Left cardiac atrium (tissue), 4 donors: ENCODE measurements at regions of chr6 and their contacts with region 1.

Region 1: GRCh38 chr6:87701676-87702588 is at the start of gene AKIRIN2:
- DNase-seq: peak; percentile 96
- ATAC-seq: peak; percentile 94
- total RNA-seq, gene AKIRIN2: 34.0 to 38.1 TPM

Region 2: DNA sequence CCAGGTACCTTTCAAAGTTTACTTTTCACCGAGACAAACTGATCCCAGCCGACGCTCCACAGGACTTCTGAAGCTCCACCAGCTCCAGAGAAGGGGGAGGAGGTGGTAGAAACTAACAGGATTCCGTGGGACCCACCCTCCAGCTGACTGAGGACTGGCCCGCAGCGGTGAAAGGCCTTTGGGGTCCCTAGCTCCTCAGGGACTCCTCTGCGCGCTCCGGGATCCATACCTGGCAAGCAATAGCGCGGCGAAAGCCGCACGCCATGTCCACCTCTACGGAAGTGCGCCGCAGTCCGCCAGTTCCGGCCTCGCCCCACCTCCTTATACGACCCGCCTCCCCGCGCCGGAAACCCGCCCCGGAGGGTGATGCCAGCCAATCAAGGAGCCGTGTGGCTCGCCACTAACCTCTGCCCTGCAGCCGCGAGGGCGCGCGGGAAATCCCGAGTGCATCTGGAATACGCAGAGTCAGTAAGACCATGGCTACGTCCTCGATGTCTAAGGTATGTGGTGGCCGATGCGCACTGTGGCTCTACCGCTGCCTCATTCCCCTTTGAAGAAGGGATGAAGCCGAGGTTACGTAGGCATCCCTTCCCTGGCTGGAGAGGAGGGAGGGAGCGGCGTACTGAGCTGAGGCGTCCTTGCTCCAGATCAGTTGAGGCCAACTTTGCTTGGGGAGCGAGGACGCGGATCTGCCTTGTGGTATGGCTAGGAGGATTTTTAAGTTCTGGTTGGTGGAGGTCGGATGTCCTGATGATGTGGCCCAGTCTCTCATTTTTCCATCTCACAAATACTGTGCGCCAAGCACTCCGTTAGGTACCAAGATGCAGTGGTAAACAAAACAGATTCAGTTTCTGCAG is 112.0 kb before region 1 on chr6 and contains the starts of genes ORC3 and RARS2:
- intact Hi-C with region 1: loop called in 1 of 2 experiments (anchors 10 kb)
- DNase-seq: peak; percentile 98
- ATAC-seq: peak; percentile 100
- total RNA-seq, gene ORC3: 18.5 to 21.2 TPM
- total RNA-seq, gene RARS2: 19.0 to 27.9 TPM

Region 3: GRCh38 chr6:87799651-87800050 is 97.7 kb after region 1 on chr6:
- intact Hi-C with region 1: loop called in 1 of 2 experiments (anchors 10 kb)
- DNase-seq: no peak
- ATAC-seq: no peak